ENCODE measurements at regions of chr4 and their contacts with region 1.

Region 1: DNA sequence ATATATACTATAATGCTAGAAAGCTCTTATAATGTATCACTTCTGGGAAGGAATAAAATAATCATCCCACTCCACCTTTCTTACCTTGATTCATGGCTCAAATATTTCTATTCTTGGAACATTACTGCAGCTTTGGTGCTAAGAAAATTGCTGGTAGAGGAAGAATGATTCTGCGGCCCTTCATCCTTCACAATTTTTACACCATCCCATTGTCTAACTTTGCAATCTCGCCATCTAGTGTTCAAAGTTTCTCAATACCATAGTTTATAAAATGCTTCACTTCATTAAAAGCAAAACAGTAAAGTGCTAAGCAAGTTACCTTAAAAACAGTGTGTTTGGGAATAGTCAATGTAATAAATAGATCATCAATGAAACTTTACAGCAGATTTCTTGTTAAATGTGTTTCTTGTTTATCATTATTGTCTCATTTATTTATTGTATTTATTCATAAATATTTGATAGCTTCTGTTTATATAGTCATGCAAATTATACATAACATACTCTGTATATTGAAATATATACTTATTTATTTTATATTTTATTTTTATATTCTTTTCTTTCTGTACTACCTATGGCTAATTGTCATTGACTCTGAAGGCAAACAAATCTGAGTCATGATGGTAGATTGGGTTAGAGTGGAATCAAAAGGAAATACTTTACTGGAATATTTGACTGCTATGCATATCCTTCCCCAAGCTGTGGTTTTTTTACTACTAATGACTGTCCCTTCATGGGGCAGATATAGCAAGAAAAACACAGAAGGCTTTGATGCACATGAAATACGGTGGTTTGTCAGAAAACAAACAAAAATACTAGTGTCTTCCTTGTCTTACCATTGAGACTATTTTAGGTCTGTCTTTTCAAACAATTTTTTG is 390.7 kb downstream of the MAPK10 start:
- DNase-seq: no peak
- ATAC-seq: peak in 6 of 8 donors; percentile 55 to 68 (median 66)
- H3K4me3 ChIP-seq: no peak overlapping the region
- H3K27ac ChIP-seq: no peak overlapping the region
- H3K4me1 ChIP-seq: peaks cover 0 to 50% (median 26%) of the 10 kb centered on the region in 9 donors
- H3K27me3 ChIP-seq: no peaks in the 10 kb centered on the region
- CTCF ChIP-seq: peak; percentile 33 to 79 (median 66)

Region 2: DNA sequence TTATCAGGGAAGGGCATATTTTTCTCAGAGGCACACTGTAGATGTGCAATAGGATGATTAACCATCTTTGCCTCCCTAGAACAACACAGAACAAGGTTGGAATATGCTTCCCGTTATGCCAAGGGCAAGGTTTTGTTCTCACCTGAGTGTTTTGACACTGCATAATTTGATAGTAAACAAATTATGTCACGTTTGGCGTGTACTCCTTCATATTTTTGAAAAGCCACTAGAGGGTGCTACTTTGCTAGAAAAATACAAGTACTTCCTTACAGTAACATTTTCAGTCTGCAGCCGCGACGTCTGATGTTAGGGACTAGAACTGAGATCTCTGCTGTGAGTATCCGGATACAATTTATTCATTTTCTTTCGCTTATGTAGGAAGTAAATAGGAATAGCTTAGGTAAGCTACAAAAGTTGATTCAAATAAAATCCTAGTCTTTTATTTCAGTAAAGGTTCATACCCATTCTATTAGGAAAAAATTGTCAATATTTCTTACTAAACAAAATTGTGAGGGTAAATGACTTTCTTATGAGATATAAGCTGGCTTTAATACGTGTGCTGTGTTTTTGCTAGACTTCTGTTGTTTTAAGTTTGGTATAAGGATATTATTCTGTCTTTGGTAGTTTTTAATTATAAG is 821.6 kb before region 1 on chr4:
- intact Hi-C with region 1: loop called in 7 of 10 experiments (anchors 2 to 10 kb)
- DNase-seq: peak; percentile 27 to 65
- ATAC-seq: peak in 7 of 8 donors; percentile 54 to 86 (median 82)
- H3K4me3 ChIP-seq: peak overlapping the region in 7 of 10 donors; percentile 18 to 46 (median 28)
- H3K27ac ChIP-seq: peak overlapping the region in 3 of 10 donors; percentile 25 to 57 (median 27)
- H3K4me1 ChIP-seq: peaks cover 0 to 22% (median 11%) of the 10 kb centered on the region in 9 donors
- H3K27me3 ChIP-seq: no peaks in the 10 kb centered on the region
- CTCF ChIP-seq: peak; percentile 38 to 81 (median 72)

Region 3: GRCh38 chr4:85756938-85757337 is 212.2 kb before region 1 on chr4:
- intact Hi-C with region 1: loop called in 5 of 10 experiments (anchors 5 to 10 kb)
- DNase-seq: peak in 1 of 2 donors; percentile 61
- ATAC-seq: peak in 6 of 8 donors; percentile 38 to 84 (median 65)
- H3K4me3 ChIP-seq: no peak overlapping the region
- H3K27ac ChIP-seq: no peak overlapping the region
- H3K4me1 ChIP-seq: peaks cover 0 to 41% (median 25%) of the 10 kb centered on the region in 9 donors
- H3K27me3 ChIP-seq: no peaks in the 10 kb centered on the region
- CTCF ChIP-seq: peak in 7 of 9 donors; percentile 45 to 67 (median 53)

Region 4: GRCh38 chr4:85790582-85790981 is 178.6 kb before region 1 on chr4:
- intact Hi-C with region 1: loop called in 5 of 10 experiments (anchors 5 to 10 kb)
- DNase-seq: no peak
- ATAC-seq: no peak
- H3K4me3 ChIP-seq: no peak overlapping the region
- H3K27ac ChIP-seq: peak overlapping the region in 1 of 10 donors; percentile 32
- H3K4me1 ChIP-seq: peaks cover 8 to 53% (median 22%) of the 10 kb centered on the region in 9 donors
- H3K27me3 ChIP-seq: no peaks in the 10 kb centered on the region
- CTCF ChIP-seq: no peak

Region 5: GRCh38 chr4:85798012-85798770 is 171.0 kb before region 1 on chr4:
- intact Hi-C with region 1: loop called in 8 of 10 experiments (anchors 2 to 10 kb)
- DNase-seq: no peak
- ATAC-seq: peak in 1 of 8 donors; percentile 8
- H3K4me3 ChIP-seq: no peak overlapping the region
- H3K27ac ChIP-seq: no peak overlapping the region
- H3K4me1 ChIP-seq: peaks cover 1 to 29% (median 21%) of the 10 kb centered on the region in 9 donors
- H3K27me3 ChIP-seq: no peaks in the 10 kb centered on the region
- CTCF ChIP-seq: no peak

Region 6: GRCh38 chr4:85826060-85826678 is 143.0 kb before region 1 on chr4:
- intact Hi-C with region 1: loop called in 2 of 10 experiments (anchors 10 kb)
- DNase-seq: peak in 1 of 2 donors; percentile 19
- ATAC-seq: peak in 7 of 8 donors; percentile 44 to 66 (median 53)
- H3K4me3 ChIP-seq: no peak overlapping the region
- H3K27ac ChIP-seq: peak overlapping the region in 7 of 10 donors; percentile 18 to 68 (median 44)
- H3K4me1 ChIP-seq: peaks cover 15 to 70% (median 37%) of the 10 kb centered on the region in 9 donors
- H3K27me3 ChIP-seq: no peaks in the 10 kb centered on the region
- CTCF ChIP-seq: peak in 6 of 9 donors; percentile 11 to 56 (median 27)